Prostate gland (tissue), 2 donors: ENCODE measurements at regions of chr11 and their contacts with region 1.

Region 1: DNA sequence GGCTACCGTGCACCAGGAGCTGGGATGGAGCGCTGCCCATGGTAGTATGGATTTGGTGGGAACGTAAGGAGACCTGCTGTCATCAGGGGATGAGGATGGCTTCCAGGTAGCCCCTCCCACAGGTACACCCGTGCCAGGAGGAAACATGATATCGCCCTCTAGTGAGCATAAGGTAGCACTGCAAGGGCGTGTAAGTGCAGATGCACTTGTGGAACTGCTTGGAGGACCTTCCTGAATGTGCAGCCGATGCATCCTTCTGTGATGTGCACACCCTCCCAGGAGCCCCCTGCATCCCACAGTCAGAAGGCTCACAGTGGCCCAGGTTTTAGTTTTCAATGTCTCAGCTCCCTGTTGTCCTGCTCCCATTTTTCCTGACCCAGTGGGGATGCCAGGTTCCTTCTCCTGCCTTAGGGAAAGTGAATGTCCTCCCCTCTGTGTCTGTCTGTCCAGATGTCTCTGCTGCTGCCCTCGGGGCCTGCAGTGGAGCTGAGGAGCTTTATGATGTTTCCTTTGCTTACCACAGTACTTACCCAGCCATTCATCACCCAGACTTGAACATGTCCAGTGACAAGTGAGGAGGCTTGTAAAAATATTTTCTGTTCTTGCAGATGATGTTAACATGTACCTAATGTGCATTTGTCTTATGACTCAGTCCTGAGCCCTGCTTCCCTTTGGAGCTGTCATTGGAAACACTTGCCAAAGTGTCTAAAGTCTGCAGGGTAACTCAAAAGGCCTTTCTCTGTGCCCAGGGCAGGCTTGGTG is 49.2 kb downstream of the DBX1 start:
- DNase-seq: peak; percentile 35
- H3K4me3 ChIP-seq: no peak overlapping the region
- H3K27ac ChIP-seq: no peak overlapping the region
- H3K4me1 ChIP-seq: peaks cover 3% of the 10 kb centered on the region
- H3K27me3 ChIP-seq: no peaks in the 10 kb centered on the region
- CTCF ChIP-seq: peak; percentile 38 to 80 (median 70)
- POLR2A ChIP-seq: no peak

Region 2: DNA sequence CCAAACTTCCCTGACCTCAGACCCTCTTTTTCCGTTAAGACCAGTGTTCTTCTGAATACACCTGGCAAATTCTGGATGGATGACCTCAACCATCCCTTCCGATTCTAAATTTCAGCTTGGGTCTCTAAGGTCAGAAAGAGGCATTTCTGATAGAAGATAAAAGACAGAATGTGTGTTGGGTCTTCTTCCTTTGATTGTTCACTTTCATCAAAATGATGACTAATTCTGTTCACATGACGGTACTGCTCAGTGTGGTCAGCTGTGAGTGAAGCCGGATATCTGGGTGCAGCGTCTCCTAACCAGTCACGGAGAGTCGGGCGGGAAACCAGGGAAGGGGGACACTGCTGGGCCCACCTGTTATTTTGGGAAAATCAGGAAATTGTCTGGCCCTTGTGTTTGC is 550.1 kb before region 1 on chr11:
- intact Hi-C with region 1: loop called (anchors 5 kb)
- DNase-seq: no peak
- H3K4me3 ChIP-seq: no peak overlapping the region
- H3K27ac ChIP-seq: no peak overlapping the region
- H3K4me1 ChIP-seq: peaks cover 3% of the 10 kb centered on the region
- H3K27me3 ChIP-seq: no peaks in the 10 kb centered on the region
- CTCF ChIP-seq: no peak
- POLR2A ChIP-seq: no peak